MCF 10A (cell line): ENCODE measurements at regions of chr9 and their contacts with region 1.

Region 1: DNA sequence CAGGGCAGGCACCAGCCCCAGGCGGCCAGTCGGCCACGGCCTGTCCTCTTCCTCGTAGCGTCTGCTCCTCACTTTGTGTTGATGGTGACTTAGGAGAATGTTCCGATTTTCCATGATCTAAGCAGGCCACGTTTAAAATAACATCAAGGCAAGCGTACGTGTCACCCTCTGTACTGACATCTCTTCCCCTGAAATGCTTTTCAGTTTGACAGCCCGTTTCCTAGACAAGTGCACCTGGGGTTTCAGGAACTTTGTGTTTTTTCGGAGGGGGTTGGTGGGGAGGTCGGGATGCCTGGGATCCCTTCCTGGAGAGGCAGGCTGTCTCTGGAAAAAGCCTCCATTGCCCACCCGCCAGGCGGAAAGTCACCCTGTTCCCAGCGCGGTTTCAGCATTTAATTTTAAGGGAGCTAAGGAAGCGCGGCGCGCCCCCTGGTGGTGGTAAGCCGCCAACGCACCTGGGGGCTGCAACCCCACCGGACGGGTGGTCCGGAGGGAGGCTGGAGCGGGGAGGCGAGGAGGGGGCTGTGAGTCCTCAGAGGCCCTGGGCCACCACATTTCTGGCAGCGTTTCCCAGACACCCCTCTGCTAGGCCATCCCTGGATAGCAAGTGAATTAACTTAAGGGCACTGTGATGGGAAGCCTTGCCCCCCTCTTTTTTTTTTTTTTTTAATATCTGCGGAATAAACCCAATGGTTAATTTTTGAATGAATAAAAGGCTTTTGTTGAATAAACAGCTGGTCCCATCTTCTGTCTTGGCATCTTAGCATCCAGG is 29.5 kb upstream of the HMCN2 start:
- DNase-seq: peak; percentile 49
- H3K4me3 Mint-ChIP-seq: no peak overlapping the region
- H3K27ac Mint-ChIP-seq: no peak overlapping the region
- H3K4me1 Mint-ChIP-seq: peaks cover 5% of the 10 kb centered on the region
- H3K27me3 Mint-ChIP-seq: no peaks in the 10 kb centered on the region
- CTCF ChIP-seq: peak; percentile 98

Region 2: DNA sequence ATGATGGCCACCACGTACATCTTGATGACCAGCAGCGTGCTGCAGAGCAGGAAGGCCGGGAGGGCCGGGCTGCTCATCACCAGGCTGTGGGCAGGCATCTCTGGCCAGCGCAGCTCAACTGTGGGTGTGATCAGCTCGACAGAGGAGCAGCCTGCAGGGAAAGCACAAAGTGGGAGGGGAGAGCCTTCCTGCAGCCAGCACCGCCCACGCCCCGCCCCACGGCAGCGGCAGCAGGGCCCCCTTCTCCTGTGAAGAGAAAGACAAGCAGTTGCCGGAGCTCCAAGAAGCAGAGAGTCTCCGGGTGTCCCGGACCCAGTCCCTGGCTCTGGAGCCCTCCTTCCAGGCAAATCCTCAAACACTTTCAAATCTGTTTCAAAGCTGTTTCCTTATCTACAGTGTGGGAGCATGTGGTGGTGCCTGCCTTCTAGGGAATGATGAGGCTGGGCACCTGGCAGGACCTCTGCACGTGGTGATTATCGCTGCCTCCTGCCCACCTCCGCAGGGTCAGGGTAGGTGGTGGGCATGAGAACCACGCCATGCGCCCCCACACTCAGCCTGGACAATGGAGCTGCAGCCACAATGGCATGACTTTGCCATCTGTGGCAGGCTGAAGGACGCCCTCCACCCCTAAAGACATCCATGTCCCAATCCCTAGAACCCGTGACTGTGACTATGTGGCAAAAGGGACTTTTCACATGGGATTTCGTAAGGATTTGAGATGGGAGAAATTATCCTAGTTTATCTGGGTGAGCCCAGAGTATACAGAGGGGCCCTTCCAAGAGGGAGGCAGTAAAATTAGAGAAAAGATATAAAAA is 483.0 kb before region 1 on chr9 and contains the start of gene PTGES:
- CTCF ChIA-PET with region 1: no interaction called
- POLR2A ChIA-PET with region 1: no interaction called
- intact Hi-C with region 1: no loop called
- DNase-seq: peak; percentile 90
- H3K4me3 Mint-ChIP-seq: peak within 1 kb of the TSS; percentile 93
- H3K27ac Mint-ChIP-seq: peak within 1 kb of the TSS; percentile 82
- H3K4me1 Mint-ChIP-seq: peaks cover 22% of the 10 kb centered on the region
- H3K27me3 Mint-ChIP-seq: no peaks in the 10 kb centered on the region
- CTCF ChIP-seq: no peak
- total RNA-seq, gene PTGES: 74.0 and 96.6 TPM in 2 replicates

Region 3: GRCh38 chr9:129884220-129885017 is 351.7 kb before region 1 on chr9:
- CTCF ChIA-PET with region 1: interaction called, 3 read pairs
- POLR2A ChIA-PET with region 1: no interaction called
- intact Hi-C with region 1: loop called (anchors 5 kb)
- DNase-seq: peak; percentile 83
- H3K4me3 Mint-ChIP-seq: peak overlapping the region; percentile 56
- H3K27ac Mint-ChIP-seq: peak overlapping the region; percentile 10
- H3K4me1 Mint-ChIP-seq: peaks cover 5% of the 10 kb centered on the region
- H3K27me3 Mint-ChIP-seq: no peaks in the 10 kb centered on the region
- CTCF ChIP-seq: no peak

Region 4: GRCh38 chr9:130225586-130225985 is 10.5 kb before region 1 on chr9:
- CTCF ChIA-PET with region 1: interaction called, 14 read pairs
- POLR2A ChIA-PET with region 1: no interaction called
- intact Hi-C with region 1: no loop called
- DNase-seq: no peak
- H3K4me3 Mint-ChIP-seq: no peak overlapping the region
- H3K27ac Mint-ChIP-seq: no peak overlapping the region
- H3K4me1 Mint-ChIP-seq: no peaks in the 10 kb centered on the region
- H3K27me3 Mint-ChIP-seq: no peaks in the 10 kb centered on the region
- CTCF ChIP-seq: no peak